Mammary epithelial cell (primary cell): ENCODE measurements at regions of chr4 and their contacts with region 1.

Region 1: DNA sequence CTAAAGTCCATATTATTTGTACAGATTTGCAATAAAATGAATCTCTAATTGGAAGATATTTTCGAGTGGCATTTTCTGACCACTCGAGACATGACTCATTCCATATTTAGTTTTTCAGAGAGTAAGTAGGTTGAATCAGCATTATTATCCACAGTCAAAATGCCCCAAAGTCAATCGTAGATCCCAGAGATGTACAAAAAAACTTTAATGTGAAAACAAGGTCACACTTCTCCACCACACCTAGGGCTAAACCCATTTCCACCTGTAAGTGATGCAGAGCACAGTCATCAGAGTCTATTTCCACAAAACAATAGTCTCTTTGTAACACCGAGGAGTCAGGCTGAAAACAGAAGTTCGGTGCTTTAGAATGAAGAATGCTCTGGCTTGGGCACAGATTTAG is 117.1 kb upstream of the TENM3 start:
- DNase-seq: peak; percentile 95
- H3K4me3 ChIP-seq: peak overlapping the region; percentile 0 to 34 (median 30)
- H3K27ac ChIP-seq: peak overlapping the region; percentile 100
- H3K4me1 ChIP-seq: peaks cover 35% of the 10 kb centered on the region
- H3K27me3 ChIP-seq: no peaks in the 10 kb centered on the region
- CTCF ChIP-seq: no peak

Region 2: GRCh38 chr4:181845617-181846016 is 280.5 kb before region 1 on chr4:
- CTCF ChIA-PET with region 1: no interaction called
- dilution Hi-C with region 1: no loop called
- in situ Hi-C with region 1: no loop called
- intact Hi-C with region 1: no loop called
- DNase-seq: peak; percentile 68
- H3K4me3 ChIP-seq: no peak overlapping the region
- H3K27ac ChIP-seq: peak overlapping the region; percentile 32
- H3K4me1 ChIP-seq: peaks cover 8% of the 10 kb centered on the region
- H3K27me3 ChIP-seq: no peaks in the 10 kb centered on the region
- CTCF ChIP-seq: no peak

Region 3: DNA sequence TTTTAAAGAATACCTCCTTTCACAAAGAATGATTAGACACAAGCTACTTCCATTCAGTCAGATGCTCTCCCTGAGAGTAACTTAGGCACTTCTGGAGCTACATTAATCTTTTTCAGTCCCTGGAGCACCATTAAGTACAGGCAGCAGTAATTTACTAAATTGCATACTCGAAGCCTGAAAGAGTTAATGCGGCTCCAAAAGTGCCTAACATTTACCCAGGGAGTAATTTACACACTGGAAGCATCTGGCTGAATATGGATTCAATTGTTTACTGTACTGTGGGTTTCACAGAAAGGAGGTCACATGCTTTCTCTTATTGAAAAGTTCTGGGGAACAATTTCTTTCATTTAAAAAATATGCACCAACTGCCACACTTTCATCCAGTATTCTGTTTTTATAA is 143.7 kb before region 1 on chr4:
- CTCF ChIA-PET with region 1: no interaction called
- dilution Hi-C with region 1: no loop called
- in situ Hi-C with region 1: no loop called
- intact Hi-C with region 1: no loop called
- DNase-seq: no peak
- H3K4me3 ChIP-seq: no peak overlapping the region
- H3K27ac ChIP-seq: no peak overlapping the region
- H3K4me1 ChIP-seq: no peaks in the 10 kb centered on the region
- H3K27me3 ChIP-seq: no peaks in the 10 kb centered on the region
- CTCF ChIP-seq: no peak

Region 4: GRCh38 chr4:182246401-182247205 is 120.5 kb after region 1 on chr4:
- CTCF ChIA-PET with region 1: no interaction called
- dilution Hi-C with region 1: no loop called
- in situ Hi-C with region 1: no loop called
- intact Hi-C with region 1: loop called (anchors 5 kb)
- DNase-seq: peak; percentile 86
- H3K4me3 ChIP-seq: peak overlapping the region; percentile 37 to 42 (median 38)
- H3K27ac ChIP-seq: peak overlapping the region; percentile 75
- H3K4me1 ChIP-seq: peaks cover 47% of the 10 kb centered on the region
- H3K27me3 ChIP-seq: no peaks in the 10 kb centered on the region
- CTCF ChIP-seq: no peak